Activated T-helper 2 cell treated with anti-CD3 and anti-CD28 coated beads, Interferon-gamma antibody, Interleukin-2, Interleukin-4, amounts not matched to agents 10 μg/mL and 5 μg/mL and 100 μg/mL, durations not matched to agents 14 hours and 24 hours and 36 hours (primary cell): ENCODE measurements at regions of chr11 and their contacts with region 1.

Region 1: GRCh38 chr11:102560555-102561011 is 30.0 kb upstream of the MMP7 start:
- DNase-seq: no peak
- H3K4me3 Mint-ChIP-seq: peak overlapping the region; percentile 54
- H3K27ac Mint-ChIP-seq: peak overlapping the region; percentile 75
- H3K4me1 Mint-ChIP-seq: peaks cover 45% of the 10 kb centered on the region
- H3K27me3 Mint-ChIP-seq: peaks cover 3% of the 10 kb centered on the region

Region 2: DNA sequence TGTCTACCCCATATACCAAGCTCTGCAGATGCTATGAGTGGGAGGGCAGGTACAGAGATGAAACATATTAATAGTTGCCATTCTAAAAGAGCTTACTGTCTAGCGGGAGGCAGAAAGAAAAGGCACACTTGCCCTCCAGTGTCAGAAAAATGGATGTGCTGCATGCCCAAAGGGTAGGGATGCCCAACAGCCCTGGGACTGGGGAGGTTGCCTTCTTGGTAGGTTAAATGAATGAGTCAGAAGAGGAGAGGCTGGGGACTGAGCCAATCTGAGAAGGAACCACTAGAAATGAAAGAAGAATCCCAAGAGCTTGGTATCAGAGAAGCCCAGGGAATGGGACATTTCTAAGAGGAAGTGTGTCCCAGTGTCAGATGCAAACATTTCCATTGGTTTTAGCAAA is 242.1 kb before region 1 on chr11:
- intact Hi-C with region 1: no loop called
- DNase-seq: no peak
- H3K4me3 Mint-ChIP-seq: peak overlapping the region; percentile 98
- H3K27ac Mint-ChIP-seq: peak overlapping the region; percentile 92
- H3K4me1 Mint-ChIP-seq: peaks cover 57% of the 10 kb centered on the region
- H3K27me3 Mint-ChIP-seq: no peaks in the 10 kb centered on the region

Region 3: GRCh38 chr11:102346748-102347461 is 213.7 kb before region 1 on chr11 and contains the start of gene BIRC2:
- intact Hi-C with region 1: loop called (anchors 5 kb)
- DNase-seq: peak; percentile 92
- H3K4me3 Mint-ChIP-seq: peak within 1 kb of the TSS; percentile 98
- H3K27ac Mint-ChIP-seq: peak within 1 kb of the TSS; percentile 98
- H3K4me1 Mint-ChIP-seq: peaks cover 29% of the 10 kb centered on the region
- H3K27me3 Mint-ChIP-seq: no peaks in the 10 kb centered on the region
- total RNA-seq, gene BIRC2: 28.0 and 30.4 TPM in 2 replicates

Region 4: GRCh38 chr11:102382384-102382783 is 178.2 kb before region 1 on chr11:
- intact Hi-C with region 1: no loop called
- DNase-seq: no peak
- H3K4me3 Mint-ChIP-seq: no peak overlapping the region
- H3K27ac Mint-ChIP-seq: no peak overlapping the region
- H3K4me1 Mint-ChIP-seq: peaks cover 10% of the 10 kb centered on the region
- H3K27me3 Mint-ChIP-seq: no peaks in the 10 kb centered on the region

Region 5: DNA sequence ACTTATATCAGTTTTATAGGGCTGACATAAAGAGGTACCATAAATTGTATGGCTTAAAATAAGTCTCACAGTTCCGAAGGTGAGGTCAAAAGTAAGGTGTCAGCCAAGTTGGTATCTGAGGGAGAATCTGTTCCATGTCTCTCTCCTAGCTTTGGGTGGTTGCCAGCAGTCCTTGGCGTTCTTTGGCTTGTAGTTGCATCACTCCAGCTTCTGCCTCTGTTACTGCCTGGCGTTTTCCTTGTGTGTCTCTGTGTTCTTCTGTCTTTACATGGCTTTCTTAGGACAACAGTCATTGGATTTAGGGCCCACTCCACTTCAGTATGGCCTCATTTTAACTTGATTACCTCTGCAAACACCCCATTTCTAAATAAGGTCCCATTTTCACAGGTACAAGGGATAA is 46.7 kb before region 1 on chr11:
- intact Hi-C with region 1: no loop called
- DNase-seq: no peak
- H3K4me3 Mint-ChIP-seq: no peak overlapping the region
- H3K27ac Mint-ChIP-seq: no peak overlapping the region
- H3K4me1 Mint-ChIP-seq: no peaks in the 10 kb centered on the region
- H3K27me3 Mint-ChIP-seq: peaks cover 16% of the 10 kb centered on the region

Region 6: GRCh38 chr11:102577182-102577581 is 16.6 kb after region 1 on chr11:
- intact Hi-C with region 1: loop called (anchors 2 kb)
- DNase-seq: no peak
- H3K4me3 Mint-ChIP-seq: no peak overlapping the region
- H3K27ac Mint-ChIP-seq: no peak overlapping the region
- H3K4me1 Mint-ChIP-seq: peaks cover 36% of the 10 kb centered on the region
- H3K27me3 Mint-ChIP-seq: no peaks in the 10 kb centered on the region

Region 7: DNA sequence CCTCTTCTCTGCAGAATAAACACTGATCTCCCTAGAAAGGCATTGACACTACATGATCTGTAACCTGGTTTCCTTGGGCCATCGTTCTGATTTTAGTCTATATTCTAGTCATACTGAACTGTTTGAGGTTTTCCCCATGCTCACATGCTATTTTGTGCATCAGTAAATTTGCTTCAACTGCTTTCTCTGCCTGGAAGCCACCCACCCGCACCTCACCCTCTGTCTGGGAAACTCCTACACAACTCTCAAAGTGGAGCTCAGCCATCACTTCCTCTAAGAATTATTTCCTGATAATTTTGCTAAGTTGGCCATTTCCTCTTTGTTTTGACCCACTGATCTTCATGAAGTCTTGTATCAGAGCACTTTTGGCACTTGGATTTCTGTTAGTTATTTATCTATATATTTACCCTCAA is 28.5 kb after region 1 on chr11:
- intact Hi-C with region 1: loop called (anchors 1 kb)
- DNase-seq: no peak
- H3K4me3 Mint-ChIP-seq: no peak overlapping the region
- H3K27ac Mint-ChIP-seq: peak overlapping the region; percentile 31
- H3K4me1 Mint-ChIP-seq: peaks cover 32% of the 10 kb centered on the region
- H3K27me3 Mint-ChIP-seq: no peaks in the 10 kb centered on the region

Region 8: GRCh38 chr11:102614485-102614884 is 53.9 kb after region 1 on chr11:
- intact Hi-C with region 1: no loop called
- DNase-seq: no peak
- H3K4me3 Mint-ChIP-seq: no peak overlapping the region
- H3K27ac Mint-ChIP-seq: no peak overlapping the region
- H3K4me1 Mint-ChIP-seq: peaks cover 18% of the 10 kb centered on the region
- H3K27me3 Mint-ChIP-seq: no peaks in the 10 kb centered on the region